Dendritic cell treated with granulocyte-macrophage colony-stimulating factor and Interleukin-4, amounts not matched to agents 40 ng/mL and 50 ng/mL, for 4 days (primary cell): ENCODE measurements at regions of chr1 and their contacts with region 1.

Region 1: DNA sequence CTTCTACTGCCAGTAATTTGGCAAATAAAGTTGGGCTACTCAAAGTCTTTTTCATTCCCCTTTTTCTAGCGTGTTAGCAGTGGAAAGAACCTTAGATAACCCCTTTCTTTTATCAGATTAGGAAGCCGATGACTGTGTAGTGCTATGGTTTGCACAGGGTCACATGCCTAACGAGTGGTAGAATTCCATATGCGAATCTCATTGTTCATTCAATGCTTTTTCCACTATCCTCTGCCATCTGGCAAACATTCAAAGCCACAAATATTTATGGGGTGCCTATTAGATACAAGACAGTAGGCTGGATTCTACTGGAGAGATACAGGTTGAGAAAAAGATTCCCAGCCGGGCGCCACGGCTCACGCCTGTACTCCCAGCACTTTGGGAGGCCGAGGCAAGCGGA is 14.9 kb upstream of the IER5 start:
- H3K4me3 Mint-ChIP-seq: no peak overlapping the region
- H3K27ac Mint-ChIP-seq: no peak overlapping the region
- H3K4me1 Mint-ChIP-seq: peaks cover 10% of the 10 kb centered on the region
- H3K27me3 Mint-ChIP-seq: peaks cover 3% of the 10 kb centered on the region

Region 2: DNA sequence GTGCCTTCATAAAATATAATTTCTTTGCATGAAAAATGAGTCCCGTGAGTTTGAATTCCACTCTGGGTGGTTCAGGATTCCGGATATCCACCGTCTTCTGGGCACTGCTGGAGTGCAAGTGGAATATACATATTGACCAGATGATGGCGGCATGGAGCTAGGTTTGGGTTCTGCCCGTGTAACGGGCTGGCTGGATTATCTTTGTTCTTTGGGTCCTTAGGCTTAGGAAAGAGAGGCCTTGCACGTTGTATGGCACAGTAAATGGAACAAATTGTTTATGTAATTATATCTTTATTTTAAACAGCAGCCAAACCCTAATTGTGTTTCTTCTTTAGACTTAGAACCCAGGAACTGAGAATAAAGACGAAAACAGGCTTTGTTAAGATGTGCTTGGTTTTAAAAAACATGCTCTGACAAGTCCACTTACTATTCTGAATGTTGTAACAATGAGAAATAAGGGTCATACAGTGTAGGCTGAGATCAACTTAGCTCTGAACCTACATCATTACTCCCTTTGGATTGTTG is 557.7 kb before region 1 on chr1:
- intact Hi-C with region 1: loop called (anchors 10 kb)
- H3K4me3 Mint-ChIP-seq: no peak overlapping the region
- H3K27ac Mint-ChIP-seq: no peak overlapping the region
- H3K4me1 Mint-ChIP-seq: no peaks in the 10 kb centered on the region
- H3K27me3 Mint-ChIP-seq: peaks cover 2% of the 10 kb centered on the region